ENCODE measurements at regions of chr16 and their contacts with region 1.

Region 1: DNA sequence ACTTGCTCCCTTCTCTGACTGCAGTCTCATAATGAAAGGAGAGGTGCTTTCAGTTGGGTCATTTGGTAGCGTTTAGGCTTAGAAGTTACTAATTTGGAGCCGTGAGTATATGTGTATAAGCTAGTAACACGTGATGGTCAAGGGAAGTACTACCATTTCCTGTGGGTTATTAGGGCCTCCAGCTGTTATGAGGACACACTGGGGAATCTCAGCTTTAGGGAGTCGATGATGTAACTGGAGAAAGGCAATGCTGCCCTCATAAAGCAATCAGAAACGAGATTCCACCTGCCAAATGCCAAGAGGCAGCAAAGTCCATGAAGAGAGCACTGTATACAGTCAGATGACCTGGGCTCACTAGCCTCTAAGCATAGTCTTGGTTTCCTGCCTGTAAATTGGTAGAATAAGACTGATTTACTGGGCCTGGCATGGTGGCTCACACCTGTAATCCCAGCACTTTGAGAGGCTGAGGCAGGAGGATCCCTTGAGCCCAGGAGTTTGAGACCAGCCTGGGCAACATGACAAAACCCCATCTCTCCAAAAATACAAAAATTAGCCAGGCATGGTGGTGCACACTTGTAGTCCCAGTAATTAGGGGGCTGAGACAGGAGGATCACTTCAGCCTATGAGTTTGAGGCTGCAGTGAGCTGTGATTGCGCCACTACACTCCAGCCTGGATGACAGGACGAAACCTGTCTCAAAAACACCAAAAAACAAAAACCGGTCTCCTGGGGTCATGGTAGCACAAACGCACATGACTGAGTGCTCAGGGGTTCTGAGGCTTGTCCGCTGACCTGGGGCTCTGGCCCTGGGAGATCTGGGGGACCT is 53.0 kb downstream of the SF3B3 start:
- DNase-seq: no peak
- H3K4me3 ChIP-seq: no peak overlapping the region
- H3K27ac ChIP-seq: no peak overlapping the region
- H3K4me1 ChIP-seq: no peaks in the 10 kb centered on the region; a peak in 1 of 7 replicates
- H3K27me3 ChIP-seq: no peaks in the 10 kb centered on the region
- CTCF ChIP-seq: no peak
- EP300 ChIP-seq: no peak
- POLR2A ChIP-seq: peak; percentile 38 to 53; a peak in 1 of 3 replicates
- RAD21 ChIP-seq: no peak

Region 2: DNA sequence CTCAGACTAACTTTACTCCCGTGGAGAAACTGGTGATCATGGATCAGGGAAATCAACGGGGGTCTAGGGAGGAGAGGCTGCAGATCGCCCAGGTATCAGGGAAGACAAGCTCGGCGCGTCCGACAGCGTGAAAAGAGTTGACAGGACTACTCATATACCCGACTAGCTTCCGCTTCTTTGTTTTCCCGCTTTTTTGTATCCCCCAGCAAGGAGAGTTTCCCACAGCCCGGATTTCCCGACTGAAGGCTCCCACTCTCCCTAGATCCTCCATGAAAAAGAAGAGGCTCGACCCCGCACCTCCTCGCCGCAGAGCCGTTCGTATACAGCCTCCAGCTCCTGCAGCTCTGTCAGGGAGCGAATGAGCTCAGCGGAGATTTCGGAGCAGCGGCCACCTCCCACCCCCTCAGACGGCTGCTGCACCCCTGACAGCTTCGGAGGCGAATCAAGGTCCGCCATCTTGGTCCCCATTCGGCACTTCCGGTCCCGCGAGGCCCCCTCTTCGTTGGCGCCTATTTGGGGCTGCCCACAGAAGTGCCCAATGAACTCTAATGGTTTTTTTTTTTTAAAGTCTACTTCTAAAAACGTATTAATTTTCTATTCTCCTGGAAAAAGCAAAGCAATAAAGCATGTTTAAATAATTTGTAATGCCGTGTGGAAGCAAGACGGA is 53.4 kb before region 1 on chr16 and contains the start of gene COG4:
- CTCF ChIA-PET with region 1: no interaction called
- POLR2A ChIA-PET with region 1: interaction called, 525 read pairs
- DNase-seq: peak; percentile 59 to 88
- H3K4me3 ChIP-seq: peak within 1 kb of the TSS; percentile 88 to 96 (median 91)
- H3K27ac ChIP-seq: peak within 1 kb of the TSS; percentile 91
- H3K4me1 ChIP-seq: peaks cover 0 to 4% (median 3%) of the 10 kb centered on the region in 4 experiments; a peak in 5 of 7 replicates
- H3K27me3 ChIP-seq: no peaks in the 10 kb centered on the region
- CTCF ChIP-seq: no peak
- EP300 ChIP-seq: no peak
- POLR2A ChIP-seq: peak in 1 of 2 experiments; percentile 36; a peak in 2 of 3 replicates
- RAD21 ChIP-seq: no peak
- total RNA-seq, gene COG4: 46.1 and 52.2 TPM in 2 replicates

Region 3: GRCh38 chr16:70529051-70529777 is 47.4 kb before region 1 on chr16:
- CTCF ChIA-PET with region 1: no interaction called
- POLR2A ChIA-PET with region 1: interaction called, 525 read pairs
- DNase-seq: no peak
- H3K4me3 ChIP-seq: no peak overlapping the region
- H3K27ac ChIP-seq: no peak overlapping the region
- H3K4me1 ChIP-seq: peaks cover 0 to 4% (median 1%) of the 10 kb centered on the region in 4 experiments; a peak in 2 of 7 replicates
- H3K27me3 ChIP-seq: no peaks in the 10 kb centered on the region
- CTCF ChIP-seq: no peak
- EP300 ChIP-seq: no peak
- POLR2A ChIP-seq: no peak
- RAD21 ChIP-seq: no peak

Region 4: DNA sequence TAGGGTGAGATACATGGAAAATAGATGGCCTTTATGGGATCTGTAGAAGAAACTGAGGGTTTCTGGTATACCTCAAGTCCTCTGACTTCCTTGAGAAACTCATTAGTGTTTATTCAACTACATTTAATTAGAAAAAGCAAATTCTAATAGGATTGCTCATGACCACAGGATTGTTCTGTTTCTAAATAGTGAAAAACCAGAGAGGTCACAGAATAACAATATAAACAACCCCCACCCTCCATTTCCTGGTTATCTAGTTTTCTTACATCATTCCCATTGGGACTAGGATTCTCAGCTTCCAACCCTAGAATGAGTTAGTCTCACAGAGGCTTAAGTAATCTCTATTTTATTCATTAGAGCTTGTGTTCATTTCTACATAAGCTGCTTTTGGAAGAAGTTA is 23.0 kb before region 1 on chr16:
- CTCF ChIA-PET with region 1: interaction called, 4 read pairs
- POLR2A ChIA-PET with region 1: interaction called, 525 read pairs
- DNase-seq: no peak
- H3K4me3 ChIP-seq: no peak overlapping the region
- H3K27ac ChIP-seq: no peak overlapping the region
- H3K4me1 ChIP-seq: no peaks in the 10 kb centered on the region
- H3K27me3 ChIP-seq: no peaks in the 10 kb centered on the region
- CTCF ChIP-seq: no peak
- EP300 ChIP-seq: no peak
- POLR2A ChIP-seq: no peak
- RAD21 ChIP-seq: no peak

Region 5: GRCh38 chr16:70561623-70562022 is 15.0 kb before region 1 on chr16:
- CTCF ChIA-PET with region 1: interaction called, 8 read pairs
- POLR2A ChIA-PET with region 1: interaction called, 159 read pairs
- DNase-seq: no peak
- H3K4me3 ChIP-seq: no peak overlapping the region
- H3K27ac ChIP-seq: no peak overlapping the region
- H3K4me1 ChIP-seq: no peaks in the 10 kb centered on the region
- H3K27me3 ChIP-seq: no peaks in the 10 kb centered on the region
- CTCF ChIP-seq: no peak
- EP300 ChIP-seq: no peak
- POLR2A ChIP-seq: no peak
- RAD21 ChIP-seq: no peak

Region 6: GRCh38 chr16:70589998-70590471 is 13.4 kb after region 1 on chr16:
- CTCF ChIA-PET with region 1: interaction called, 15 read pairs
- POLR2A ChIA-PET with region 1: interaction called, 37 read pairs
- DNase-seq: no peak
- H3K4me3 ChIP-seq: no peak overlapping the region
- H3K27ac ChIP-seq: no peak overlapping the region
- H3K4me1 ChIP-seq: peaks cover 2 to 7% (median 3%) of the 10 kb centered on the region in 4 experiments; a peak in 4 of 7 replicates
- H3K27me3 ChIP-seq: no peaks in the 10 kb centered on the region
- CTCF ChIP-seq: no peak
- EP300 ChIP-seq: no peak
- POLR2A ChIP-seq: no peak
- RAD21 ChIP-seq: no peak

Region 7: DNA sequence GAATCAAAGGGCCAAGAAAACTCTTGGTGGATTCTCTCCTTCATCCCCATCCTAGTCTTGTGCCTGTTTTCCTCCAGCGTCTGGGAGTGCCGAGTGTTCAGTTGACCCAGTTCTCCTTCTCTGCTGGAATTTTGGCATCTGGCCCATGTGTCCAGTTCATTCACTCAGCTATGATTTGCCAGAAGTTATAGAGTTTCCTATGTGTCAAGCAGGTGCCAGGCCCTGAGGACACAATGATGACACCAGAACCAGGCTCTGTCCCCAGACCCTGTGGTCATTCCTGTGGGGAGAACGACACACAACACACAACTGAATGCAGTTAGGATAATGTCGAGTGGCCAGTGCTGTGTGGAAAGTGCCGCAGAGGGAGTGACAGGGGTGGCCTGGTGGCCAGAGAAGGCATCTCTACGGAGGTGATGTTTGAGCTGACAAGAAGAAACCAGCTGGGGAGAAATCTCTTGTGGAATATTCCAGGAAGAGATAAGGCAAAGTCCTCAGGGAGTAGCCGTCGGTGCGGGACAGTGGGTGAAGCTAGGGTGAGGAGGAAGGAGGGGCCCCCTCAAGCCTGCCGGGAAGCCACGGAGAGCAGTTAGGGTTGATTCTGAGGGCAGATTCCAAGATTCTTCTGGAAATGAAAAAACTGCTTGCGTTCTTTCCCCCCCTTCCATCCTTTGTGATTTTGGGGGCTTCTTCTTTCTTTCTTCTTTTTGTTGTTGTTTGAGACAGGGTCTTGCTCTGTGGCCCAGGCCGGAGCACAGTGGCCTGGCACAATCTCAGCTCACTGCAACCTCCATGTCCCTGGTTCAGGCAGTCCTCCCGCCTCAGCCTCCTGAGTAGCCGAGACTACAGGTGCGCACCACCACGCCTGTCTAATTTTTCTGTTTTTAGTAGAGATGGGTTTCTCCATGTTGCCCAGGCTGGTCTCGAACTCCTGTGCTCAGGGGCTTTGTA is 33.9 kb after region 1 on chr16:
- CTCF ChIA-PET with region 1: interaction called, 7 read pairs
- POLR2A ChIA-PET with region 1: interaction called, 75 read pairs
- DNase-seq: no peak
- H3K4me3 ChIP-seq: no peak overlapping the region
- H3K27ac ChIP-seq: no peak overlapping the region
- H3K4me1 ChIP-seq: peaks cover 0 to 3% (median 0%) of the 10 kb centered on the region in 4 experiments; a peak in 2 of 7 replicates
- H3K27me3 ChIP-seq: no peaks in the 10 kb centered on the region
- CTCF ChIP-seq: no peak
- EP300 ChIP-seq: no peak
- POLR2A ChIP-seq: no peak
- RAD21 ChIP-seq: no peak

Region 8: DNA sequence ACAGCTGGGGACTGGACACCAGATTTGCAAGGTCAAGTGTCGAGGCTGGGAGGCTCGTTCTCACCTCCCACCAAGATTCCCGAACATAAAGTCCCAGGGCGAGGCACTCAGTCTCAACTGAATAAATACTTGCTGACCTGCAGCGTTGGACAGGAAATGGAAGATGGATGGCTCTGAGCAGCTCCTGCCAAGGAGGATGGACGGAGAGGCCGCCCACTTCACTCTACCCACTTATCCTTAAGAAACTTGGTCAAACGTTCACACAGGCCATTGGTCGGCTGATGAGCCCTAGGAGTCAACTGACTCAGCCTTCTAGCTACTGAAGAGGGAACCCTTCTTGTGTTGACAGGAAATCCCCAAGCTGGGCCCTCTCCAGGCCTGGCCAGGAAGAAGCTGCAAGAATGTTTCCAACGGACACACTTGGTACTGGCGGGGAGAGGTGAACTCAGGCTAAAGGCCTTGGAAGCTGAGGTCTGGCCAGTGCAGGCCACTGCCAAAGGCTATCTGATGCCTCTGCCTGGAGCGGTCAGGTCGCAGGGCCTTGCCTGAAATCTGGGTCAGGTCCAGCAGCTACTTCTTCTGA is 174.3 kb after region 1 on chr16:
- CTCF ChIA-PET with region 1: no interaction called
- POLR2A ChIA-PET with region 1: no interaction called
- DNase-seq: no peak
- H3K4me3 ChIP-seq: no peak overlapping the region
- H3K27ac ChIP-seq: no peak overlapping the region
- H3K4me1 ChIP-seq: peaks cover 0 to 10% (median 6%) of the 10 kb centered on the region in 4 experiments; a peak in 5 of 7 replicates
- H3K27me3 ChIP-seq: no peaks in the 10 kb centered on the region
- CTCF ChIP-seq: no peak
- EP300 ChIP-seq: no peak
- POLR2A ChIP-seq: no peak
- RAD21 ChIP-seq: no peak